Mucosa of descending colon (tissue), 3 donors: ENCODE measurements at regions of chr11 and their contacts with region 1.

Region 1: DNA sequence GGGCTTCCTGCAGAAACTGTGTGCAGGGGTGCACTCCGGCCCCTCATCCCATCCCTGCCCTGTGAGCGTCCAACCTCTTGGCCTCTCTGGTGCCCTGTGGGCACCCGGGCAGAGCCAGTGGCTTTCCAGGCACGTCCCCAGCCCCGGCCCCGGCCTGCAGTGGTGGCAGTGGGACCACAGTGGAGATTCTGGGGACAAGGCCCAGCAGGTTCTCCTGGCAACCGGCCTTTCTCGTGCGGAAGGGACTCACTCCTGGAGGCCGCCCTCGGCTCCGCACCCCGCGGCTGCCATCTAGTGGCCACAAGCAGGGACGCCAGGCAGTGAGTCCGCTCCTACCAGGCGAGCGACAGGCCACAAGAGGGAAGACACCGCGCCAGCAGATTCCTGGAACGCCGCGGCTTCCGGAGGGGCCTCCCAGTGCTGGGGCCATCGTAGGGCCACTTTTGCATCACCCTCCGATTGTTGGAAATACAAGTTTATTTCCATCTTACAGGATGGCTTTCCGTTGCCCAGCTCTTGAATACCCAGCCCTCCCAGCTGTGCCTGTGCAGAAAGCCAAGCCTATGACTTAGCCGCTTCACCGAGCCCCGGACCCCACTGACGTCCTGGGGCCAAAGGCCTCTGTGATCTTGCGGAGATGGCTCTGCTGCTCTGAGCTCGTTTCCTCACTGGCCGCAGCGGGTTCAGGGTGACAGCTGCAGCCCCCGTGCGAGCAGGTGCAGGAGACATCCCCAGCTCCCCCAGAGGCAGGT is 357.3 kb downstream of the CTTN start:
- DNase-seq: peak; percentile 71 to 85 (median 80)
- ATAC-seq: peak; percentile 99
- H3K4me3 ChIP-seq: no peak overlapping the region
- H3K4me1 ChIP-seq: no peaks in the 10 kb centered on the region
- CTCF ChIP-seq: peak; percentile 93

Region 2: GRCh38 chr11:70467201-70468085 is 288.1 kb before region 1 on chr11:
- intact Hi-C with region 1: loop called (anchors 2 to 5 kb)
- DNase-seq: peak in 2 of 3 donors; percentile 61 to 76
- ATAC-seq: peak; percentile 71
- H3K4me3 ChIP-seq: no peak overlapping the region
- H3K4me1 ChIP-seq: no peaks in the 10 kb centered on the region
- CTCF ChIP-seq: peak; percentile 66

Region 3: GRCh38 chr11:71070491-71071453 is 315.2 kb after region 1 on chr11:
- intact Hi-C with region 1: no loop called
- DNase-seq: no peak
- ATAC-seq: no peak
- H3K4me3 ChIP-seq: no peak overlapping the region
- H3K4me1 ChIP-seq: no peaks in the 10 kb centered on the region
- CTCF ChIP-seq: no peak